BJ (cell line): ENCODE measurements at regions of chr4 and their contacts with region 1.

Region 1: GRCh38 chr4:70651864-70652506 is 14.3 kb downstream of the JCHAIN start:
- DNase-seq: no peak
- H3K4me3 ChIP-seq: no peak overlapping the region
- H3K27me3 ChIP-seq: no peaks in the 10 kb centered on the region
- CTCF ChIP-seq: peak; percentile 53

Region 2: GRCh38 chr4:69649629-69650028 is 1002.4 kb before region 1 on chr4:
- CTCF ChIA-PET with region 1: no interaction called
- POLR2A ChIA-PET with region 1: no interaction called
- DNase-seq: no peak
- H3K4me3 ChIP-seq: no peak overlapping the region
- H3K27me3 ChIP-seq: no peaks in the 10 kb centered on the region
- CTCF ChIP-seq: no peak

Region 3: GRCh38 chr4:70239884-70240591 is 411.9 kb before region 1 on chr4:
- CTCF ChIA-PET with region 1: no interaction called
- POLR2A ChIA-PET with region 1: no interaction called
- DNase-seq: no peak
- H3K4me3 ChIP-seq: no peak overlapping the region
- H3K27me3 ChIP-seq: no peaks in the 10 kb centered on the region
- CTCF ChIP-seq: no peak

Region 4: DNA sequence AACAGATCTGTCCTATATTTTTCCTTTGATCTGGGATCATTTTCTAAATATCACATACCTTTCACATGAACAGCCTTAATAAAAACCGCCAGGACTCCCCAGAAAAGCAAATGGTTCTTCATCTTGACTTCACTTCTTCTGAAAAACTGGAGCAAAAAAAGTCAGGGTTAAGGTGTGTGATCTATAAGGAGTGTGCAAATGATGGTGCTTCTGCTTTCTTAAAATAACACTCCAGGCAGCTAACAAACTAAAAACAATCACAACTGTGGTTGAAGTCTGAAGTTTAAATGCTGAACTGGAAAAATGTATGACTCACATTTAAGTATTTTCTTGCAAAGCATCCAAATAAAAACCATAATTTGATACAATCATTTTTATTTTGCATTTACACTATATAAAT is 14.4 kb after region 1 on chr4 and contains the start of gene JCHAIN:
- CTCF ChIA-PET with region 1: interaction called, 11 read pairs
- POLR2A ChIA-PET with region 1: no interaction called
- DNase-seq: no peak
- H3K4me3 ChIP-seq: no peak within 1 kb of the TSS; the same call in 1 of the 2 replicates
- H3K27me3 ChIP-seq: no peaks in the 10 kb centered on the region
- CTCF ChIP-seq: no peak
- polyA plus RNA-seq, gene JCHAIN: 8.5 and 14.9 TPM in 2 replicates

Region 5: DNA sequence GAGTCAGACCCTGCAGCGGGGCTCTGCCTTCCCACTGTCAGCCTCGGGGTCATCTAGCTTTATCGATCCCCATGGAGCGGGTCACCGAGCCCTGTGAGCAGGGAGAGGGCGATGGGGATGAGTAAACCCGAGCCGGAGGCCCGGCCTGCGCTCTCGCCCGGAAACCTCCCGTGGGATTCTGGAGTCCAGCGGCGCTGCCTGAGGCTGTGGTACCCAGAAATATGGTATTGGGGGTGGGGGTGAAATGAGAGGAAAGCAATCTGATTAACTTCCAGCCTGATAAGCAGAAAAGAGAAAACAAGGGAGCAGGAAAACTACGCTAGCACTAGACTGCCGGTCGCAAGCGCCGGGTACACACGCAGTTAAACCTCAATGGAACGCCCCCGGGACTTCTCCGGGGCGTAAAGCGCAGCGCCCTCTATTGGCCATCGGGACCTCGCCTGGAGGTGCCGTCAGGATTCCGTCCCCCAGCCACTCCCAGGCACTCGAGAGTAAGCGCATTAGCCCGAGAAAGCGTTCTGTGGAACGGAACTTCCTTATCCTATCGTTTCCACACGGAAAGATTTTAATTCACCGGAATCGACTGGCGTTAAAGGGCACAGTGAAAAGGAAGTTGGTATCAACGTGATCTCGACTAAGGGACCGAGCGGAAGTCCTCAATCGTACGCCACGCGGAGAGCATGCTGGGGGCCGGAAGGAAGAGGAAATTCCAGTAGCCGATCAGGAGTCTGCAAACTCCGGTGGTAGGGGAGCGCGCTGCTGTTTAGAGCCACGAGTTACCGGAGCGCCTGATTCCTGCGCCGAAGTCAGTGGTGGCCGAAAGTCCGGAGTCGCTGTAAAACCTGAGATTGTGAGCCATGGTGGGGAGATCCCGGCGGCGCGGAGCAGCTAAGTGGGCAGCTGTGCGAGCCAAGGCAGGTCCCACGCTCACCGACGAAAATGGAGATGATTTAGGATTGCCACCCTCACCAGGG is 36.1 kb after region 1 on chr4 and contains the start of gene UTP3:
- CTCF ChIA-PET with region 1: interaction called, 7 read pairs
- POLR2A ChIA-PET with region 1: interaction called, 15 read pairs
- DNase-seq: peak; percentile 98
- H3K4me3 ChIP-seq: peak within 1 kb of the TSS; percentile 86
- H3K27me3 ChIP-seq: no peaks in the 10 kb centered on the region
- CTCF ChIP-seq: peak; percentile 98
- polyA plus RNA-seq, gene UTP3: 10.4 and 16.8 TPM in 2 replicates